ENCODE measurements at regions of chr10 and their contacts with region 1.

Region 1: GRCh38 chr10:90893190-90893589 is 21.4 kb downstream of the RPP30 start:
- DNase-seq: no peak
- H3K4me3 Mint-ChIP-seq: no peak overlapping the region
- H3K27ac Mint-ChIP-seq: no peak overlapping the region
- H3K4me1 Mint-ChIP-seq: peaks cover 20% of the 10 kb centered on the region
- H3K27me3 Mint-ChIP-seq: no peaks in the 10 kb centered on the region

Region 2: DNA sequence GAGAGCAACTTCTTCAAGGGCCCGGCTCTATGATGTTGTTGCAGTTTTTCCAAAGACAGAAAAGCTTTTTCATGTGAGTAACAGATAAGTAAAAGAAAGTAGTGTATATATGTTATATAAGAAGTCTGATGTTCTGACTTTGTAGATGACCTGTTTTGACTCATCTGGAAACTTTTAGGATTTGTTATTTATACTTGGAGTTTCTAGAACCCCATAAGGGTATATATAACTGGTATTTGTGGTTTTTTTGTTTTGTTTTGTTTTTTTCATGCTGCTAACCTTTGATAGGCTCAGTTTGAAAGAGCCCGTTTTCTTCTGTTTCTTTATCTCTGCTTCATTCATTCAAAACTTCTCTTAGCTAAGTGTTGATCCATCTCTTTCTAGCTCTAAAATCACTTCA is 14.1 kb before region 1 on chr10:
- CTCF ChIA-PET with region 1: interaction called, 12 read pairs
- POLR2A ChIA-PET with region 1: interaction called, 3 read pairs
- intact Hi-C with region 1: no loop called
- DNase-seq: no peak
- H3K4me3 Mint-ChIP-seq: no peak overlapping the region
- H3K27ac Mint-ChIP-seq: no peak overlapping the region
- H3K4me1 Mint-ChIP-seq: peaks cover 22% of the 10 kb centered on the region
- H3K27me3 Mint-ChIP-seq: no peaks in the 10 kb centered on the region